IMR-90 (cell line): ENCODE measurements at regions of chr21 and their contacts with region 1.

Region 1: DNA sequence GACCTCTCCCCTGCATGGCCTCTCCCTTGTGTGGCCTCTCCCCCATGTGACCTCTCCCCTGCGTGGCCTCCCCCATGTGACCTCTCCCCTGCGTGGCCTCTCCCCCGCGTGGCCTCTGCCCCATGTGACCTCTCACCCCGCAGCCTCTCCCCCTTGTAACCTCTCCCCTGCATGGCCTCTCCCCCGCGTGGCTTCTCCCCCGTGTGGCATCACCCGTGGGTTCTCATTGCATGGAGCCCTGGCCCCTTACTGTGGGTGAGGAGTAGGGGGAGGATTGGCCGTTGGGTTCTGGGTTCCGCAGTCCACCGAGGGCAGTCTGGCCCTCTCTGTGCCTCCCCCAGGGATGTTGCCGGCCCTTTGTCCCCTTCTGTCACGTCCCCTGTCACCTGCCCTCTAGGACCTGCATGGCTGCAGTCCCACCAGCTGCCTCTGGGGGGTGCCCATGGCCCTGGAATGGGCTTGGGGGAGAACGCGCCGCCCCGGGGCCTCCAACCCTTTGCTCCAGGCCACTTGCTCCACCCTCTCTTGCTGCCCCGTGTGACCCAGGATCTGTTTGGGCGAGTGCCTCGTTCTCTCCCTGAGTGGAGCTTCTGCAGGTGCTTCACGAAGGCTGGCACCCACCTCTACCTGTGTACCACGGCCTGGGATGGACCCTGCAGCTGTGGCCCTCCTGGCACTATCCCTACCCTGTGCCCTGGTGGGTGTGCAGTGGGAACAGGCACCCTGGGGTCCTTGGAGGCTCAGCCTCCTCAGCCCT is 21.3 kb downstream of the RRP1 start:
- DNase-seq: peak; percentile 44
- ATAC-seq: peak; percentile 96
- H3K4me3 ChIP-seq: no peak overlapping the region
- H3K27ac ChIP-seq: no peak overlapping the region
- H3K4me1 ChIP-seq: peaks cover 2% of the 10 kb centered on the region; the same call in 1 of the 2 replicates
- H3K27me3 ChIP-seq: no peaks in the 10 kb centered on the region; the same call in 1 of the 2 replicates
- CTCF ChIP-seq: peak; percentile 88
- POLR2A ChIP-seq: no peak; the same call in 1 of the 2 replicates
- RAD21 ChIP-seq: peak; percentile 94

Region 2: GRCh38 chr21:43976661-43977060 is 166.0 kb after region 1 on chr21:
- CTCF ChIA-PET with region 1: interaction called, 4 read pairs
- POLR2A ChIA-PET with region 1: no interaction called
- dilution Hi-C with region 1: no loop called
- in situ Hi-C with region 1: no loop called
- intact Hi-C with region 1: loop called (anchors 1 kb)
- DNase-seq: no peak
- ATAC-seq: no peak
- H3K4me3 ChIP-seq: no peak overlapping the region
- H3K27ac ChIP-seq: no peak overlapping the region
- H3K4me1 ChIP-seq: peaks cover 2% of the 10 kb centered on the region; the same call in 1 of the 2 replicates
- H3K27me3 ChIP-seq: no peaks in the 10 kb centered on the region
- CTCF ChIP-seq: no peak
- POLR2A ChIP-seq: no peak
- RAD21 ChIP-seq: no peak